Activated naive CD8-positive, alpha-beta T cell treated with anti-CD3 and anti-CD28 coated beads, Interleukin-2, amount 10 ng/mL, durations not matched to agents 7 days and 5 days (primary cell): ENCODE measurements at regions of chr5 and their contacts with region 1.

Region 1: DNA sequence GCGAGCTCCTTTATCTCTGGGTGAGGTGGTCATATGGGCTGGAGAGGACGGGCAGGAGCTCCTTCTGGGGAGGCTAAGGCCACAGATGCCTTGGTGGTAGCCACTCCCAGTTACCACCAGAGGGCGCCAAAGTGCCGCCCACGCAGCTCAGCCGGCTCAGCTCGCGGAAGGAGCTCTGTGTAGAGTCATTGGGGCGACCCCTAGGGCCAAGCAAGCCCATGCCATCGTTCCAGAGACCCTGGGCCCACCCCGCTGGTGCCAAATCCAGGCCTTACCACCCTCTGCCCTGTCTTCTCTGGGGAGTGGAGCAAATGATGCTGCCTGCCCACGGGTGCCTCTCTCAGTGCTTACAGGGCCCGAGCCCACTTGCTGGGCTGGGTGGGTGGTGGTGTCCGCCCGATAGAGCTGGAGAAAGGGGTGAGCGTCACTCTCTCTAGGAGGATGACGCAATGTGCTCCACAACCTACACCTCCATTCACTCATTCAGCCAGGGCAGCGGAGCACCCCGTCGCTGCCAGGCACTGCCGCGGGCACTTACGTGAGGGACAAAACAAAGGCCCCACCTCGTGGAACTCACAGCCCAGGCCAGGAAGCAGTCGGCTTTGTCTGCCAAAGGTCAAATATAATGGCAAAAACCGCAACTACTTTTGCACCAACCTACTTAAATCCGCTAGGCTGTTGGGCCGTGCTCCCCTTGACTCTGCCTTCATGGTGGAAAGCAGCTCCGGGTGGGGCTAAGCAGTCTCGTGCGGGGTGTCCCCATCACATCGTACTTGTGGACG is 13.8 kb downstream of the TSPAN17 start:
- DNase-seq: peak; percentile 83
- ATAC-seq: peak; percentile 73
- H3K4me3 Mint-ChIP-seq: no peak overlapping the region
- H3K27ac Mint-ChIP-seq: no peak overlapping the region
- H3K4me1 Mint-ChIP-seq: peaks cover 27% of the 10 kb centered on the region
- H3K27me3 Mint-ChIP-seq: peaks cover 15% of the 10 kb centered on the region

Region 2: DNA sequence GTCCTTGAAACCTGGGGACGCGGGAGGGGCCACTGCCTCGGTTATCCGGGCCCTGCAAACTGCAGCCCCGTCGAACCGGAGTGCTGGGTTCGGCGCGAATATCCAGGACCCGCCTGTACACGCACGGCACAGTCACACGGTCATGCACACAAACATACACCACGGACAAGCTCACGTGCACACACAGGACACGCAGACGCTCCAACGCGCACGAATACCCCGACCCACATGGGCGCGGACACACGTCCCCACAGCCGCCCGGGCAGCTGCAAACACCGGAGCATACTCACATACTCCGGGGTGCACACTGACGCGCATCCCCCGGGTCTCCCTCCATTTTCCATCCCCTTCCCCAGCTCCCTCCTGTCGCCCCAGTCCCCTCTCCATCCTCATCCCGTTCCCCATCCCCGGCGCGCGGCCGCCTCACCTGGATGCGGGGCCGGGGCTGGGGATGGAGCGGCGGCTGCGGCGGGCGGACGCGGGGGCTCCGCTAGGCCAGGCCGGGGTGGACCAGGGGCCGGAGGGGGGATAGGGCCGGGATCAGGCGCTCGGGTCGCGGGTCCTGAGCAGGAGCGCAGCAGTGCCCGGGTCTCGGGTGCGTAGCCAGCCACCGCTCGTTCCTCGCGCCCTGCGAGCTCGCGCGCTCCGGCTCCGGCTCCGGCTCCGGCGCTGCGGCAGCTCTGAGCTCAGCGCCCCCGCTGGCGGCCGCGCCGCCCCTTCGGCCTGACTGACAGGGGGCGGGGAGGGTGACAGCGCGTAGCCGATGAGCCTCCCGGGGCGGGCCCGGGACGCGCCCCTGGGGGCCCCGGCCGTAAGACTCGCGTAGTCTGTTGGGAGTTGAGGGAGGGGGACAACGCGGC is 31.0 kb before region 1 on chr5 and contains the starts of genes EIF4E1B and SNCB:
- POLR2A ChIA-PET with region 1: no interaction called
- DNase-seq: peak; percentile 78
- ATAC-seq: peak; percentile 92
- H3K4me3 Mint-ChIP-seq: peak within 1 kb of the TSS; percentile 64
- H3K27ac Mint-ChIP-seq: no peak within 1 kb of the TSS
- H3K4me1 Mint-ChIP-seq: peaks cover 17% of the 10 kb centered on the region
- H3K27me3 Mint-ChIP-seq: peaks cover 75% of the 10 kb centered on the region
- total RNA-seq, gene EIF4E1B: not detected
- total RNA-seq, gene SNCB: 0.28 TPM in 1 of 2 experiments, not detected in the other

Region 3: GRCh38 chr5:176647030-176647866 is 13.8 kb before region 1 on chr5 and contains the start of gene TSPAN17:
- POLR2A ChIA-PET with region 1: interaction called, 33 read pairs
- DNase-seq: peak; percentile 99
- ATAC-seq: peak; percentile 82
- H3K4me3 Mint-ChIP-seq: peak within 1 kb of the TSS; percentile 89
- H3K27ac Mint-ChIP-seq: peak within 1 kb of the TSS; percentile 86
- H3K4me1 Mint-ChIP-seq: peaks cover 35% of the 10 kb centered on the region
- H3K27me3 Mint-ChIP-seq: no peaks in the 10 kb centered on the region
- total RNA-seq, gene TSPAN17: 39.6 to 40.7 TPM

Region 4: DNA sequence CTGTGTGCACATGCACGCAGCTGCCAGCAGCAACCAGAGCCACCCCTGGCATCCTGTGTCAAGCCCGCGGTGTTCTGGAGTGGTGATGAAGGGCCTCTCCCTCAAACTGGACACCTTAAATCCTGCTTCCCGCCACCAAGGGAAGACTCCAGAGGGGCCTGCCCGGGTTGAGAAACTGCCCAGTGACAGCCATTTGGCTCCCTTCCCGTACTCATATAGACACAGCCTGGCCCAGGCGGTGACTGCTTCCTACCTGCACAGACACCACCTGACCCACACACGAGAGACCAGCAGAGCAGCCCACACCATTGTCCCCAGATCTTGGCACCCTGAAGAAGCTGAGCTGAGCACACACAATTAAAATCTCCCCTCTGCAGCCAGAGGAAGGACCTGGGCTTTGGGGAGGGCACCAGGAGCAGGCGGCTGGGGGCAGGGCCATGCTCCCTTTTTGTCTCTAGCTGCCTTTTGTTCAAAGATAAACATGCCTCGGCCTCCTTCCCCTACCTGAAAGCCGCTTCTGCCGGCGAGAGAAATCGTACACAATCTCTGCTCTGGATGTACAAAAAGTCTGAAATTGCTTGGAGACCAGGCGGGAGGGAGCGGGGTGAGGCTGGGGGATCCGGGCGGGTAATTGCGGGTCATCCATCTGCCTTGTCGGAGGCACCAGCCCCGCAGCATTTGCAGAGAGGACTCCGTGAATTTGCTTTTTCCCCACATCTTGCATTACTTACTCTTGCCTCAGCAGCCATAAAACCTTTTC is 64.7 kb after region 1 on chr5:
- POLR2A ChIA-PET with region 1: no interaction called
- DNase-seq: no peak
- ATAC-seq: no peak
- H3K4me3 Mint-ChIP-seq: no peak overlapping the region
- H3K27ac Mint-ChIP-seq: no peak overlapping the region
- H3K4me1 Mint-ChIP-seq: peaks cover 4% of the 10 kb centered on the region
- H3K27me3 Mint-ChIP-seq: peaks cover 35% of the 10 kb centered on the region